Naive thymus-derived CD4-positive, alpha-beta T cell (primary cell): ENCODE measurements at regions of chr6 and their contacts with region 1.

Region 1: DNA sequence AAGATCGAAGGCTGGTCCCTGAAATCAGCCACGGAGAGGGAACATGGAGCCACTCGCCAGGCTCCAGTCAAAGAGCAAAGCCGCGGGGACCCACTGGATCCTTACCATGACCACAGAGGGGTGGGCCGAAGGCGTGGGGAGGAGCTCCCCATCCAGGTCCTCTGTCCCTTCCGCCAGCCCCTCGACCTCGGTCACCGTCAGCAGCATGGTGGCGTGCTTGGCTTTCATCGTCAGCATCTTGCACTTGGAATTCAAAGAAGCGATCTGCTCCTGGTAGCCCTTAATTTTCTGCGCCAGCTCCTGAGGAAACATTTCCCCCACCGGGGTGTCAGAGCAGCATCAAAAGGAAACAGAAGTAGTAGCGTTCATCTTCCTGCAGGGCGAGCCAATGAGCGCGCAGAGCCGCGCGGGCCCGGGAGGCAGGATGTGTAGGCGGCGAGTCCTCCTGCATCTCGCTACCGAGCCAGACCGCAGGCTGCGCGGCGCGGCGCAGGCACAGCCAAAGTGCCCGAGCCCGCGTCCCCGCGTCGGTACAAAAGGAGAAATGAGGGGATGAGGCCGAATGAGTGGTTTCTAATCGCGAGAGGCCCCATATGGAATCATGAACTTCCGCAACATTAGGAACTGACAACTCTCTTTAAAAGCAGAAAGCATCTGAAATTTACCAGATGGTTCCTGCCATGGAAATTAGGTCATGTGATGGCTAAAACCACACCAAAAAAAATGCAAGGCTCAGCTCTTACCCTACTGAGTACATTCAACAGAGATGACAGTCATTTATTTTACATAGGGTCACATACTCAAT is 335.2 kb downstream of the SYNE1 start:
- DNase-seq: peak; percentile 76 to 91 (median 87)
- ATAC-seq: peak; percentile 98
- H3K4me3 ChIP-seq: peak overlapping the region; percentile 84
- H3K4me3 Mint-ChIP-seq: peak overlapping the region; percentile 87 to 100 (median 100)
- H3K27ac ChIP-seq: peak overlapping the region; percentile 85
- H3K27ac Mint-ChIP-seq: peak overlapping the region; percentile 92 to 100 (median 99)
- H3K4me1 ChIP-seq: peaks cover 12 to 14% of the 10 kb centered on the region in 2 donors
- H3K4me1 Mint-ChIP-seq: peaks cover 22 to 49% (median 40%) of the 10 kb centered on the region in 7 donors
- H3K27me3 ChIP-seq: no peaks in the 10 kb centered on the region
- H3K27me3 Mint-ChIP-seq: no peaks in the 10 kb centered on the region

Region 2: GRCh38 chr6:152170705-152171667 is 131.0 kb before region 1 on chr6:
- CTCF ChIA-PET with region 1: no interaction called
- POLR2A ChIA-PET with region 1: interaction called, 4 read pairs
- intact Hi-C with region 1: loop called in 1 of 2 experiments (anchors 1 kb)
- DNase-seq: peak in 3 of 9 donors; percentile 11 to 37 (median 22)
- ATAC-seq: peak; percentile 87
- H3K4me3 ChIP-seq: peak overlapping the region; percentile 16
- H3K4me3 Mint-ChIP-seq: peak overlapping the region in 9 of 10 donors; percentile 14 to 76 (median 55)
- H3K27ac ChIP-seq: peak overlapping the region; percentile 12
- H3K27ac Mint-ChIP-seq: peak overlapping the region; percentile 65 to 94 (median 88)
- H3K4me1 ChIP-seq: peaks cover 12 to 25% of the 10 kb centered on the region in 2 donors
- H3K4me1 Mint-ChIP-seq: peaks cover 23 to 71% (median 57%) of the 10 kb centered on the region in 7 donors
- H3K27me3 ChIP-seq: no peaks in the 10 kb centered on the region
- H3K27me3 Mint-ChIP-seq: no peaks in the 10 kb centered on the region

Region 3: GRCh38 chr6:152232501-152233151 is 69.3 kb before region 1 on chr6:
- CTCF ChIA-PET with region 1: no interaction called
- POLR2A ChIA-PET with region 1: interaction called, 6 read pairs
- intact Hi-C with region 1: loop called (anchors 2 kb)
- DNase-seq: peak in 5 of 9 donors; percentile 1 to 31 (median 21)
- ATAC-seq: peak; percentile 58
- H3K4me3 ChIP-seq: no peak overlapping the region
- H3K4me3 Mint-ChIP-seq: peak overlapping the region; percentile 55 to 84 (median 78)
- H3K27ac ChIP-seq: no peak overlapping the region
- H3K27ac Mint-ChIP-seq: peak overlapping the region; percentile 35 to 95 (median 86)
- H3K4me1 ChIP-seq: peaks cover 2 to 14% of the 10 kb centered on the region in 2 donors
- H3K4me1 Mint-ChIP-seq: peaks cover 10 to 33% (median 30%) of the 10 kb centered on the region in 7 donors
- H3K27me3 ChIP-seq: no peaks in the 10 kb centered on the region
- H3K27me3 Mint-ChIP-seq: no peaks in the 10 kb centered on the region

Region 4: GRCh38 chr6:152273638-152274037 is 28.3 kb before region 1 on chr6:
- CTCF ChIA-PET with region 1: no interaction called
- POLR2A ChIA-PET with region 1: no interaction called
- intact Hi-C with region 1: no loop called
- DNase-seq: no peak
- ATAC-seq: no peak
- H3K4me3 ChIP-seq: no peak overlapping the region
- H3K4me3 Mint-ChIP-seq: no peak overlapping the region
- H3K27ac ChIP-seq: no peak overlapping the region
- H3K27ac Mint-ChIP-seq: peak overlapping the region in 3 of 9 donors; percentile 28 to 48 (median 31)
- H3K4me1 ChIP-seq: no peaks in the 10 kb centered on the region
- H3K4me1 Mint-ChIP-seq: peaks cover 0 to 13% (median 0%) of the 10 kb centered on the region in 7 donors
- H3K27me3 ChIP-seq: no peaks in the 10 kb centered on the region
- H3K27me3 Mint-ChIP-seq: no peaks in the 10 kb centered on the region

Region 5: GRCh38 chr6:152318278-152318677 is 16.3 kb after region 1 on chr6:
- CTCF ChIA-PET with region 1: interaction called, 11 read pairs
- POLR2A ChIA-PET with region 1: interaction called, 3 read pairs
- intact Hi-C with region 1: no loop called
- DNase-seq: no peak
- ATAC-seq: no peak
- H3K4me3 ChIP-seq: no peak overlapping the region
- H3K4me3 Mint-ChIP-seq: no peak overlapping the region
- H3K27ac ChIP-seq: no peak overlapping the region
- H3K27ac Mint-ChIP-seq: no peak overlapping the region
- H3K4me1 ChIP-seq: no peaks in the 10 kb centered on the region
- H3K4me1 Mint-ChIP-seq: peaks cover 0 to 5% (median 0%) of the 10 kb centered on the region in 7 donors
- H3K27me3 ChIP-seq: no peaks in the 10 kb centered on the region
- H3K27me3 Mint-ChIP-seq: peaks cover 0 to 29% (median 4%) of the 10 kb centered on the region in 5 donors

Region 6: DNA sequence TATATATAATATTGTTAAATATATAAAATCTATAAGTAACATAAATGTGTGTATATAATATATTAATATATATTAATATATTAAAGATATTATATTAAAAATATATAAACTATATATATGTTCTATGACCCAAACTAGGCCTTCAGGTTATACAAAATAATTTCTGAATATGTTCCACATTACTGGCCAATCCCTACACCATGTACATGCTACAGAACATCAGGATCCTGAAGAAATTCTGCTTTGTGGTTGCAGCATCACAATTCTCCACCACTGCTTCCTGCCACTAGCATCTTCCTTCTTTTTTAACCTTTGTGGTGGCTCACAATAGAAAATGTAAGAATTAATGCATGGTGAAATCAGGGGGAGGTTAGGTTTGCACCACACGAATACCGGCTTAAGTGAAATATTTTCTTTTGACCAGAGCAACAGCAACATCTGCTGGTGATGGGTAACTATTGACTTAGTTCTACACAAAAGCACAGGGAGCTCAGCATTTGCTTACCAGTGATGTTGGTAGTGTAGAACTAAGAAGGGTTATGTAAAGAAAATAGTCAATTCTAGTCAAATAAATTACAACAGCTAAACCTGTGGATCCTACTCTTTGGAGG is 54.6 kb after region 1 on chr6:
- CTCF ChIA-PET with region 1: interaction called, 4 read pairs
- POLR2A ChIA-PET with region 1: no interaction called
- intact Hi-C with region 1: loop called in 1 of 2 experiments (anchors 1 kb)
- DNase-seq: peak in 6 of 9 donors; percentile 24 to 46 (median 32)
- ATAC-seq: peak; percentile 63
- H3K4me3 ChIP-seq: no peak overlapping the region
- H3K4me3 Mint-ChIP-seq: no peak overlapping the region
- H3K27ac ChIP-seq: no peak overlapping the region
- H3K27ac Mint-ChIP-seq: no peak overlapping the region
- H3K4me1 ChIP-seq: no peaks in the 10 kb centered on the region
- H3K4me1 Mint-ChIP-seq: no peaks in the 10 kb centered on the region
- H3K27me3 ChIP-seq: no peaks in the 10 kb centered on the region
- H3K27me3 Mint-ChIP-seq: peaks cover 0 to 11% (median 0%) of the 10 kb centered on the region in 5 donors

Region 7: GRCh38 chr6:153002607-153003365 is 700.8 kb after region 1 on chr6 and contains the start of gene MTRF1L:
- CTCF ChIA-PET with region 1: no interaction called
- POLR2A ChIA-PET with region 1: no interaction called
- intact Hi-C with region 1: loop called in 1 of 2 experiments (anchors 2 kb)
- DNase-seq: peak; percentile 52 to 84 (median 70)
- ATAC-seq: peak; percentile 92
- H3K4me3 ChIP-seq: peak within 1 kb of the TSS; percentile 63
- H3K4me3 Mint-ChIP-seq: peak within 1 kb of the TSS; percentile 85 to 99 (median 96)
- H3K27ac ChIP-seq: peak within 1 kb of the TSS; percentile 73
- H3K27ac Mint-ChIP-seq: peak within 1 kb of the TSS; percentile 86 to 98 (median 93)
- H3K4me1 ChIP-seq: peaks cover 18% of the 10 kb centered on the region in 2 donors
- H3K4me1 Mint-ChIP-seq: peaks cover 24 to 59% (median 49%) of the 10 kb centered on the region in 7 donors
- H3K27me3 ChIP-seq: no peaks in the 10 kb centered on the region
- H3K27me3 Mint-ChIP-seq: peaks cover 0 to 18% (median 0%) of the 10 kb centered on the region in 5 donors
- total RNA-seq, gene MTRF1L: 8.9 to 18.1 (median 13.5) TPM